Heart right ventricle (tissue), 16 donors: ENCODE measurements at regions of chr10 and their contacts with region 1.

Region 1: GRCh38 chr10:114550756-114551635 is 107.1 kb downstream of the ABLIM1 start:
- DNase-seq: peak; percentile 59 to 80
- ATAC-seq: peak; percentile 27 to 70 (median 48)
- H3K4me3 ChIP-seq: peak overlapping the region in 6 of 10 donors; percentile 12 to 36 (median 20)
- H3K27ac ChIP-seq: peak overlapping the region; percentile 58 to 78 (median 74)
- H3K4me1 ChIP-seq: peaks cover 10 to 99% (median 70%) of the 10 kb centered on the region in 9 donors
- H3K27me3 ChIP-seq: no peaks in the 10 kb centered on the region
- CTCF ChIP-seq: peak in 8 of 9 donors; percentile 17 to 70 (median 54)

Region 2: DNA sequence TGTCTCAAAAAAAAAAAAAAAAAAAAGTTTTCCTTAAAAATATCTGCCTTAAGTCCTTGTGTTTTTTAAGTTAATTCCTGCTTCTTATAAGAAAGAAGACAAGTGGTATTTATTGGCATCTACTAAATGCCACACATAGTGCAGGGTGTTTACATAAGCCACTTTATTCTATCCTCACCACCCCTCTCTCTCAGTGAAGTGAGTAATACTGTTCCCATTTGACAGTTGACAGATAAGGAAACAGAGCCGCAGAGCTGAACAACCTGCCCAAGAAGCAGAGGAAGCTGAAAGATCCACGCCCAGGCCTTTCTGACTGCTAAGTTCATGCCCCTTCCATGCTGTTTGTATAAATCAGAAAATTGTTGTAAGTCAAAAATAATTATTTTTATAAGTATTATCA is 53.0 kb after region 1 on chr10:
- intact Hi-C with region 1: loop called in 1 of 10 experiments (anchors 10 kb)
- DNase-seq: no peak
- ATAC-seq: peak; percentile 36 to 84 (median 74)
- H3K4me3 ChIP-seq: no peak overlapping the region
- H3K27ac ChIP-seq: peak overlapping the region; percentile 37 to 87 (median 64)
- H3K4me1 ChIP-seq: peaks cover 18 to 90% (median 70%) of the 10 kb centered on the region in 9 donors
- H3K27me3 ChIP-seq: no peaks in the 10 kb centered on the region
- CTCF ChIP-seq: no peak

Region 3: DNA sequence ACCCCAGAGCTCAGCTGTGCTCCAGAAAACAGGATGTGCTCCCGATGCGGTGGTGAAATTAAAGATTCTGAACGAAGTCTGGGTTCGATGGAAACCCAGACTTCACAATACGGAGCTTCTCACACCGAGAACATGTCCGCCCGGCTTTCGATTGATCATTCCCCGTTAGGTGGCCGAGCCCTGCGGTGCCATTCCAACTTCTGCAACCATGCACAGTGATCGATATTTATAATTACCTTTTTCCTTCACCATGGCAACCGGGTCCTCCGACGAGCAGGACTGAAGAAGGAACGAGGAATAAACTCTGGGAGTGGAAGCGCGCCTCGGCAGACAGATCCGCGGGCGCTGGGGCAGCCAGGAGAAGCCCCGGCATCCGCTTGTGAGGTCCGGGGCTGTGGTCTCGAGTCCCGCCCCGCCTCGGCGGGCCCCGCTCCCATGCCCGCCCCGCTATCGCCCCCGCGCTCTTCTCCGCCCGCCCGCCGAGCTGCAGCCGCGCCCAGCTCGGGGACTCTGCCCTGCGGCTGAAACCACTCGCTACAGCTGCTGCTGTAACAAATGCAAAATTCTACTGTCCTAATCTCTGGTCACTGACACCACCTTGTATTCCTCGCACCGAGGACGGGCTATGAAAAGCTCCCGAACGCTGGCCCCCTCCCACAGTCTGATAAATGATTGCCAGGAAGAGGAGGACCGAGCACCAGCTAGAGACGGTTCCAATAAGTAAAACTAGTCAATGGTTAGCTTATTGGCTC is 80.8 kb after region 1 on chr10:
- intact Hi-C with region 1: loop called in 4 of 10 experiments (anchors 5 kb)
- DNase-seq: peak; percentile 57 to 58
- ATAC-seq: peak; percentile 58 to 69 (median 61)
- H3K4me3 ChIP-seq: peak overlapping the region; percentile 45 to 80 (median 62)
- H3K27ac ChIP-seq: peak overlapping the region; percentile 81 to 95 (median 86)
- H3K4me1 ChIP-seq: peaks cover 8 to 93% (median 62%) of the 10 kb centered on the region in 9 donors
- H3K27me3 ChIP-seq: peaks cover 0 to 37% (median 0%) of the 10 kb centered on the region in 7 donors
- CTCF ChIP-seq: peak in 1 of 9 donors; percentile 13

Region 4: GRCh38 chr10:114694752-114695151 is 143.8 kb after region 1 on chr10:
- intact Hi-C with region 1: loop called in 4 of 10 experiments (anchors 5 to 10 kb)
- DNase-seq: no peak
- ATAC-seq: no peak
- H3K4me3 ChIP-seq: no peak overlapping the region
- H3K27ac ChIP-seq: peak overlapping the region in 5 of 10 donors; percentile 29 to 84 (median 77)
- H3K4me1 ChIP-seq: peaks cover 0 to 85% (median 49%) of the 10 kb centered on the region in 9 donors
- H3K27me3 ChIP-seq: no peaks in the 10 kb centered on the region
- CTCF ChIP-seq: peak in 7 of 9 donors; percentile 32 to 58 (median 48)

Region 5: GRCh38 chr10:114714281-114714741 is 163.3 kb after region 1 on chr10:
- intact Hi-C with region 1: loop called in 4 of 10 experiments (anchors 5 to 10 kb)
- DNase-seq: peak in 1 of 2 donors; percentile 60
- ATAC-seq: peak; percentile 50 to 87 (median 80)
- H3K4me3 ChIP-seq: peak overlapping the region in 3 of 10 donors; percentile 2 to 8 (median 4)
- H3K27ac ChIP-seq: peak overlapping the region; percentile 60 to 93 (median 75)
- H3K4me1 ChIP-seq: peaks cover 12 to 94% (median 81%) of the 10 kb centered on the region in 9 donors
- H3K27me3 ChIP-seq: no peaks in the 10 kb centered on the region
- CTCF ChIP-seq: no peak